CD8-positive, alpha-beta T cell (primary cell): ENCODE measurements at regions of chr7 and their contacts with region 1.

Region 1: DNA sequence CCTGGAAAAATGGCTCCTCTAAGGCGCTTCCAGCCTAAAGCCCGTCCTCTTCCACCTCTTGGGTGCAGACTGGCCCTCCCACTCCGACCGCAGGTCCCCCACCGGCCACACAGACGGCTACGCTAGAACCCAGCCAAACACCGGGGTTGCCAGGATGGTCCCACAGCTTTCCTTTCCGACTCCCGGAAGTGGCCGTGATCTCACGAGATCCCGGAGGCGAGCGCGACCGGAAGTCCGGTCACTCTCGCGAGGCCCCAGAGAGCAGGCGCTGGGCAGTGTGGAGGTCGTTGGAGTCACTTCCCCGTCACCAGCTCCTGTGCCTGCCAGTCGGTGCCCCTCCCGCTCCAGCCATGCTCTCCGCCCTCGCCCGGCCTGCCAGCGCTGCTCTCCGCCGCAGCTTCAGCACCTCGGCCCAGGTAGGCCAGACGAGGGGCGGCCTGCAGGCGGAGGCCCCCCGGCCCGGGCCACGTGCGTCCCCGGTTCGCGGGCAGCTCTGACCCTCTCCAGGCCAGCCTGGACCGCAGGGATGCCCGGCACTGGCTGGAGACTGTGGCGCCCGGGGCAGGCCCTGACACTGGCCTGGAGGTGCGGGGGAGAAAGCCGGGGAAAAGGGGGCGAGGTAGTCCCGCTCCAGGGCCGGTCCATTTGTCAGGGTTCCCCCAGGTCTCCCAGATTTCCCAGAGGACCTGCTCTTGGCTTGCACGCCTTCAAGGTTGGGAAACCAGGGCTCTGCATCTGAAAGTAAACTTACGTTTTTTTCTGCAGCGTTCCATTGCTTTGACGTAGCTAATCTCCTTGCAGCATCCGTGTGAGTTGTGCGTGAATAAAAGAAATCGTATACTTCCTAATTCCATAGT is at the starts of genes MDH2 and STYXL1:
- DNase-seq: peak; percentile 72 to 95 (median 86)
- ATAC-seq: peak; percentile 82
- H3K4me3 ChIP-seq: peak within 1 kb of the TSS; percentile 84 to 95
- H3K4me3 Mint-ChIP-seq: peak within 1 kb of the TSS; percentile 99
- H3K27ac ChIP-seq: peak within 1 kb of the TSS; percentile 87
- H3K27ac Mint-ChIP-seq: peak within 1 kb of the TSS; percentile 98
- H3K4me1 ChIP-seq: peaks cover 16% of the 10 kb centered on the region
- H3K4me1 Mint-ChIP-seq: peaks cover 59% of the 10 kb centered on the region
- H3K27me3 ChIP-seq: no peaks in the 10 kb centered on the region
- H3K27me3 Mint-ChIP-seq: no peaks in the 10 kb centered on the region
- CTCF ChIP-seq: no peak
- total RNA-seq, gene MDH2: 73.0 to 74.7 TPM
- total RNA-seq, gene STYXL1: 4.2 to 6.4 TPM

Region 2: GRCh38 chr7:75878769-75879611 is 169.0 kb before region 1 on chr7 and contains the start of gene RHBDD2:
- CTCF ChIA-PET with region 1: no interaction called
- POLR2A ChIA-PET with region 1: no interaction called
- intact Hi-C with region 1: loop called (anchors 2 kb)
- DNase-seq: peak; percentile 95 to 98 (median 97)
- ATAC-seq: peak; percentile 93
- H3K4me3 ChIP-seq: peak within 1 kb of the TSS; percentile 69 to 100
- H3K4me3 Mint-ChIP-seq: peak within 1 kb of the TSS; percentile 93
- H3K27ac ChIP-seq: peak within 1 kb of the TSS; percentile 73 to 88
- H3K27ac Mint-ChIP-seq: peak within 1 kb of the TSS; percentile 89
- H3K4me1 ChIP-seq: peaks cover 18% of the 10 kb centered on the region
- H3K4me1 Mint-ChIP-seq: peaks cover 34% of the 10 kb centered on the region
- H3K27me3 ChIP-seq: no peaks in the 10 kb centered on the region
- H3K27me3 Mint-ChIP-seq: no peaks in the 10 kb centered on the region
- CTCF ChIP-seq: no peak
- total RNA-seq, gene RHBDD2: 167 to 173 TPM

Region 3: GRCh38 chr7:75994388-75995051 is 53.5 kb before region 1 on chr7 and contains the start of gene TMEM120A:
- CTCF ChIA-PET with region 1: no interaction called
- POLR2A ChIA-PET with region 1: no interaction called
- intact Hi-C with region 1: loop called (anchors 2 kb)
- DNase-seq: peak; percentile 85 to 97 (median 95)
- ATAC-seq: peak; percentile 99
- H3K4me3 ChIP-seq: peak within 1 kb of the TSS; percentile 93 to 95
- H3K4me3 Mint-ChIP-seq: peak within 1 kb of the TSS; percentile 73
- H3K27ac ChIP-seq: peak within 1 kb of the TSS in 1 of 2 experiments; percentile 42
- H3K27ac Mint-ChIP-seq: no peak within 1 kb of the TSS
- H3K4me1 ChIP-seq: peaks cover 5% of the 10 kb centered on the region
- H3K4me1 Mint-ChIP-seq: peaks cover 35% of the 10 kb centered on the region
- H3K27me3 ChIP-seq: no peaks in the 10 kb centered on the region
- H3K27me3 Mint-ChIP-seq: no peaks in the 10 kb centered on the region
- CTCF ChIP-seq: no peak
- total RNA-seq, gene TMEM120A: 8.3 to 11.5 TPM

Region 4: DNA sequence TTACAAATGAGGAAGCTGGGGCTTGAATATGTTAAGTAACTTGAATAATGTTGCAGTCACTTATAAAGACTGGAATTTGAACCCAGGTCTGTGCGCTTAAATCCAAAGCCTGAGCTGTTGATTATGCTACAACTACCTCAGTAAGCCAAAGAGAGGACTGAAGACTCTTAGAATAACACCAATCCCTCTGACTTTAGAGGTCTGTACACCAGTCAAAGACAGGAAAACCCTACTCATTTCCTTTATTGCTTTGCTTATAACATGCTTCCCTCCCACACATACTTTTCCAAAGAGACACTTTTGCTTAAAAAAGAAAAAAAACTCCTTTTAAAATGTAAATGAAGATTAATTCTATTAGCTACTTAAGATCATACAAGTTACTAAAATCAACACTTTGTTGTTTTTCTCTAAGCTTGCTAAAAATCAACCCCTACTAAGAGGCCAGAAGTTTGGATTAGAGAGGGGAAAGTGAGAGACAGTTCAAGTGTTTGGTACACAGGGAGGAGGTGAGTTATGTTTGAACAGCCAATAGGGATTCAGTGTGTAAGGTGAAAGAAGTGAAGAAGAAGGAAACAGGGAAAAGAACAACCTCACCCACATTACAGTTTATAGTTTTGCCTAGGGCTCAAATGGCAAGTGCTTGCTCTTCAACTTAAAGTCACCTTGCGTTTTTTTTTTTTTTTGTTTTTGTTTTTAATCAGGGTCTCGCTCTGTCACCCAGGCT is 74.6 kb after region 1 on chr7:
- CTCF ChIA-PET with region 1: no interaction called
- POLR2A ChIA-PET with region 1: no interaction called
- intact Hi-C with region 1: no loop called
- DNase-seq: no peak
- ATAC-seq: no peak
- H3K4me3 ChIP-seq: no peak overlapping the region
- H3K4me3 Mint-ChIP-seq: no peak overlapping the region
- H3K27ac ChIP-seq: no peak overlapping the region
- H3K27ac Mint-ChIP-seq: peak overlapping the region; percentile 12
- H3K4me1 ChIP-seq: no peaks in the 10 kb centered on the region
- H3K4me1 Mint-ChIP-seq: peaks cover 9% of the 10 kb centered on the region
- H3K27me3 ChIP-seq: no peaks in the 10 kb centered on the region
- H3K27me3 Mint-ChIP-seq: no peaks in the 10 kb centered on the region
- CTCF ChIP-seq: no peak

Region 5: GRCh38 chr7:76155938-76156337 is 107.9 kb after region 1 on chr7:
- CTCF ChIA-PET with region 1: no interaction called
- POLR2A ChIA-PET with region 1: no interaction called
- intact Hi-C with region 1: no loop called
- DNase-seq: no peak
- ATAC-seq: no peak
- H3K4me3 ChIP-seq: no peak overlapping the region
- H3K4me3 Mint-ChIP-seq: no peak overlapping the region
- H3K27ac ChIP-seq: no peak overlapping the region
- H3K27ac Mint-ChIP-seq: no peak overlapping the region
- H3K4me1 ChIP-seq: peaks cover 34% of the 10 kb centered on the region
- H3K4me1 Mint-ChIP-seq: peaks cover 20% of the 10 kb centered on the region
- H3K27me3 ChIP-seq: no peaks in the 10 kb centered on the region
- H3K27me3 Mint-ChIP-seq: no peaks in the 10 kb centered on the region
- CTCF ChIP-seq: no peak

Region 6: GRCh38 chr7:76185187-76185896 is 137.3 kb after region 1 on chr7:
- CTCF ChIA-PET with region 1: no interaction called
- POLR2A ChIA-PET with region 1: no interaction called
- intact Hi-C with region 1: no loop called
- DNase-seq: no peak
- ATAC-seq: no peak
- H3K4me3 ChIP-seq: no peak overlapping the region
- H3K4me3 Mint-ChIP-seq: no peak overlapping the region
- H3K27ac ChIP-seq: no peak overlapping the region
- H3K27ac Mint-ChIP-seq: no peak overlapping the region
- H3K4me1 ChIP-seq: no peaks in the 10 kb centered on the region
- H3K4me1 Mint-ChIP-seq: no peaks in the 10 kb centered on the region
- H3K27me3 ChIP-seq: no peaks in the 10 kb centered on the region
- H3K27me3 Mint-ChIP-seq: peaks cover 3% of the 10 kb centered on the region
- CTCF ChIP-seq: no peak

Region 7: DNA sequence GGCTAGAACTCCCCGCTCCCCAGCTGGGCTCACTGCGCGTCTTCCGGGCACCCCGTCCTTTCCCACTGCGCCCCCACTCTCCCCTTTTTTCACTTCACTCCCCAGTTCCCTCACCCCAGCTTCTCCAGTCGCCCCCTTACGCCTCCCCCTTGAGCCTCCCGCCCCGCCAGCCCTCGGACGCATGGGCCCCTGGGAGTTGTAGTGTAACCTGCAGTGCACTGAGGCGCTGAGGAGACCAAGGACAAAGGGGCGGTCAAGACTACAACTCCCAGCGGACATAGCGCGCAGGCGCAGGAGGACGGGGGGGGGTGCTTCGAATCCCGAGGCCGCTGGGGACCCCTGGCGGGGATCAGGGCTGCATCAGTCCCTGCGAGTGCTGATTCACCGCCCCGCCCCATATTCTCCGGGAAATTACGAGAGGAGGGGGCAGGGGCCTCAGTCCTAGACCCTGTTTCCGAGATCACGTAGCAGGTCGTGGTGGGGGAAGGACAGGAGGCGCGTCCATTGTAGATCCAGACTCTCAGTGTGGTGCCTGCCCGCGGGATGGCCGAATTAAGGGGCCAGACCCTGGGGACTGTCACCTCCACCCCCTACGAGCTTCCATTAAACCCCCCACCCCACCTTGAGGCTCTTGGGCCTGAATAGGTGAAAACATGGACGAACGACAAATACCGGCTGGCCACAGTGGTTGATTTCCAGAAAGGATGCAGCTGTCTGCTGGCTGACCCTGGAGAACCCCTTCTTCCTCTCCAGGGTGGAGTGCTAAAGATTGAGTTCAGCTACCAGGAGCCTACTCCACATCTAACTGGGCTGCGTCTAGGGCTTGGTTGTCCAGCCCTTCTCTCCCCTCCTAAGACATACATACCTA is 311.3 kb after region 1 on chr7:
- CTCF ChIA-PET with region 1: no interaction called
- POLR2A ChIA-PET with region 1: no interaction called
- intact Hi-C with region 1: loop called in 1 of 2 experiments (anchors 2 kb)
- DNase-seq: peak; percentile 86 to 98 (median 95)
- ATAC-seq: peak; percentile 90
- H3K4me3 ChIP-seq: peak overlapping the region; percentile 94 to 99
- H3K4me3 Mint-ChIP-seq: peak overlapping the region; percentile 96
- H3K27ac ChIP-seq: peak overlapping the region; percentile 96
- H3K27ac Mint-ChIP-seq: peak overlapping the region; percentile 94
- H3K4me1 ChIP-seq: peaks cover 28% of the 10 kb centered on the region
- H3K4me1 Mint-ChIP-seq: peaks cover 39% of the 10 kb centered on the region
- H3K27me3 ChIP-seq: no peaks in the 10 kb centered on the region
- H3K27me3 Mint-ChIP-seq: no peaks in the 10 kb centered on the region
- CTCF ChIP-seq: peak; percentile 54